Activated CD4-positive, alpha-beta memory T cell treated with anti-CD3 and anti-CD28 coated beads for 36 hours (primary cell): ENCODE measurements at regions of chr7 and their contacts with region 1.

Region 1: DNA sequence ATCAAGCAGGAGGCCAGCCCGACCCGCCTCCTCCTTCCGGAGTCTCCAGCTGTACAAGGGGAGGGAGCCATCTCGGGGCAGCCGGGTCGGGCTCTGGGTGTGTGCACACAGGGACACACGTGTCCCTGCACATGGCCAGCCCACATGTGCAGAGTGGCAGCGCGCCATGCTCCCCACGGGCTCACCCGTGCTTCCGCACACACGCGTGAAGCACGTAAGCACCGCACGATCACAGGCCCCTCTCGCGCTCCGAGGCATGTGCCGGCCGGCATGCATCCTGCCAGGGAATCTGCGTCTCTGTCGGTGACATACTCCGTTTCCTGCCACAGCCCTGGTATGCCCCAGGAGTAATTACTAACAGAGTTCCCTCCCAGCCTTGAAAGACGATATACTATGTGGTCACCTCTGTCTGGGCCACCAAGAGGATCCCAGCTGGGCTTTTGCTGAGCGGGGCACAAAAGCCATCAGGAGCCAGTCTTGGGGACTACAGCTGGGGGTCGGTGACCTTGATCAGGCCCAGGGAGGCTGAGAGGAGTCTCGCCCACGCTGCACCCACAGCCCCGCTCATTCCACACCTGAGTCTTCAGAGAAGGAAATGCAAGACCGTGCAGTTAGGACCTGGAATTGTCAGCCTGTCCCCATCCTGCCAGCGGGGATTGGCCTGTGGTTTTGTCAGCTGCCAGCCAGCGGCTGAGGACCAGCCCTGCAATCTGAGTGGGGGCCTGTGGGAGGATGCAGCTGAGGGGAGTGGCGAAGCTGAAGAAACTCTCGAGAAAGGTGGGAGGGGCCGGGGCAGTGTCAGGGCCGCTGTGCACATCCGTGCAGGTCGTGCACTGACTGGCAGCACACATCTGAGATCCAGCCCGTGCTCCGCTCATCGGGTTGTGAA is 11.0 kb upstream of the LFNG start:
- DNase-seq: peak; percentile 84
- H3K4me3 Mint-ChIP-seq: peak overlapping the region; percentile 58
- H3K27ac Mint-ChIP-seq: peak overlapping the region; percentile 79
- H3K4me1 Mint-ChIP-seq: peaks cover 55% of the 10 kb centered on the region
- H3K27me3 Mint-ChIP-seq: no peaks in the 10 kb centered on the region

Region 2: GRCh38 chr7:2487586-2488271 is 20.8 kb before region 1 on chr7:
- CTCF ChIA-PET with region 1: no interaction called
- POLR2A ChIA-PET with region 1: no interaction called
- intact Hi-C with region 1: no loop called
- DNase-seq: no peak
- H3K4me3 Mint-ChIP-seq: no peak overlapping the region
- H3K27ac Mint-ChIP-seq: no peak overlapping the region
- H3K4me1 Mint-ChIP-seq: no peaks in the 10 kb centered on the region
- H3K27me3 Mint-ChIP-seq: peaks cover 3% of the 10 kb centered on the region

Region 3: GRCh38 chr7:2529161-2530070 is 20.8 kb after region 1 on chr7:
- CTCF ChIA-PET with region 1: no interaction called
- POLR2A ChIA-PET with region 1: interaction called, 13 read pairs
- intact Hi-C with region 1: no loop called
- DNase-seq: peak; percentile 78
- H3K4me3 Mint-ChIP-seq: peak overlapping the region; percentile 63
- H3K27ac Mint-ChIP-seq: peak overlapping the region; percentile 96
- H3K4me1 Mint-ChIP-seq: peaks cover 54% of the 10 kb centered on the region
- H3K27me3 Mint-ChIP-seq: no peaks in the 10 kb centered on the region